CD4-positive, alpha-beta T cell (primary cell): ENCODE measurements at regions of chr20 and their contacts with region 1.

Region 1: DNA sequence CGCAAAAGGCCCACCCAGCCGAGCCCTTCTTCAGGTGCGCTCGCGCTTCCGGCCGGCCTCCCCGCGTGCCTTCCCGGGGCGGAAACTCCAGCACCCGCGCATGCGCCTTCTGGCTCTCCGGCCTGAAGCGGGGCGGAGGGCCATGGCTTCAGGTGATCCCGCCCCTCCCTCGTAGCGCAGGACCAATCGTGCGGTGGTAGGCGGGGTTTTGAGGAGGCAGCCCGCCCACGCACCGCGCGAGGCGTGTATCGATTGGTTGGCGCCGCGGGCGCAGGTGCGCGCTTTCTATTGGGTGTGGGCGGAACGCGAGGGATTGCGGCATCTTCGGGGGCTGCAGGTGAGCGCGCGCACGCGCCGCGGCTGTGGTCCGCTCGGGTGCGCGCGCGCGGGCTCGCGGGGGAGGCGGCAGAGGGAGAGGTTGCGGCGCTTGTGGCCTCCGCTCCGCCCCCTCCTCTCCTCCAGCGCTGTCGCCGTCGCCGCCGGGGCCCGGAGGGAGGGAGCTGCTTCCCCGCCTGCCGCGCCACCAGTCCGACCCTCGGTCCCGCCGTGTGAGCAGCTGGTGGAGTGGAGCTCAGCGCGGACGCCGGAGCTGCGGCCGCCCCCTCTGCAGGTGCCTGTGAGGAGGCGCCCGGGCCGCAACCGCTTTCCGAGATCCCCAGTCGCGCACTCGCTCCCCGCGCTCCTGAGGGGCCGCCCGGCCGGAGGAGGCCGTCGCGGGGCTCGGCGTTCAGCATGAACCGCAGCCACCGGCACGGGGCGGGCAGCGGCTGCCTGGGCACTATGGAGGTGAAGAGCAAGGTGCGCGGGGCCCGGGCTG is at the start of gene PARD6B:
- DNase-seq: peak; percentile 98 to 100 (median 99)
- ATAC-seq: peak; percentile 94
- H3K4me3 ChIP-seq: peak within 1 kb of the TSS; percentile 68
- H3K4me3 Mint-ChIP-seq: peak within 1 kb of the TSS; percentile 93
- H3K27ac ChIP-seq: peak within 1 kb of the TSS; percentile 44 to 52
- H3K27ac Mint-ChIP-seq: peak within 1 kb of the TSS; percentile 88
- H3K4me1 ChIP-seq: peaks cover 16% of the 10 kb centered on the region
- H3K4me1 Mint-ChIP-seq: peaks cover 41% of the 10 kb centered on the region
- H3K27me3 ChIP-seq: no peaks in the 10 kb centered on the region
- H3K27me3 Mint-ChIP-seq: no peaks in the 10 kb centered on the region
- CTCF ChIP-seq: no peak
- total RNA-seq, gene PARD6B: 5.6 to 8.2 TPM

Region 2: DNA sequence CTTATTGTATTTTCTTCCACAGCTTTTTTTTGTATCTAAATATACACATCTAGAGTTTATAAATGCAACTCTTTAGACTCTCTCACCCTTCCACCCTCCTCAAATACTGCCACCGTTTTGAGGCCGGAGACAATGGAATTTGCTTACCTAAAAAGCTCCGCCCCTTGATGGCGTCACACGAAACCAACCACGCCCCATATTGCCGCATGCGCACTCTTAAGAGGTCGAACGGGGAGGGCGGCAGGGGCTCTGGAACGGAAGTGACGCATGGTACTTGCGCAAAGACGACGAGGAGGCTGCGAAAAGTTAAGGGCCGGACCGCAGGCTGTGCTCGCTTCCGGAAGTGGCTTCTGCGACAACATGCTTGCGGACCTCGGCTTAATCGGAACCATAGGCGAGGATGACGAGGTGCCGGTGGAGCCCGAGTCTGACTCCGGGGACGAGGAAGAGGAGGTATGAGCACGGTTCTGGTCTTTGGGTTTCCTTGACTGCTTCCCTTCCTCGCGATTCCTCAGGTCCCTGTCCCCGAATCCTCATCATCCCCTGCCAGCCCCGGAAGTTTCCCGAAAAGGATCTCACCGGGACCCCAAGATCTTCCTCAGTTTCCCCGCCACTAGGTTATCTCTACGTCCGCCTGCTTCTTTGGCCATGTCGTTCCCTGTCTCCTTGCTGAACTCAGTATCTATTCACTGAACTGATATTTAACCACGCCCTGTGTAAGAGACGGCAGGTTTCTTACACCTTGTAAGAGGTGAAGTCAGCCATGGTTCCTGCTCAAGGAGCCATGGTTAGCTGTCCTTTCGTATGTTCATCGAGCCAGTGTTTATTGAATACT is 1512.0 kb before region 1 on chr20 and contains the start of gene DDX27:
- CTCF ChIA-PET with region 1: no interaction called
- POLR2A ChIA-PET with region 1: no interaction called
- intact Hi-C with region 1: loop called in 1 of 2 experiments (anchors 5 kb)
- DNase-seq: peak; percentile 90 to 99 (median 96)
- ATAC-seq: peak; percentile 84
- H3K4me3 ChIP-seq: peak within 1 kb of the TSS; percentile 79
- H3K4me3 Mint-ChIP-seq: peak within 1 kb of the TSS; percentile 86
- H3K27ac ChIP-seq: peak within 1 kb of the TSS; percentile 85 to 91
- H3K27ac Mint-ChIP-seq: peak within 1 kb of the TSS; percentile 87
- H3K4me1 ChIP-seq: peaks cover 33% of the 10 kb centered on the region
- H3K4me1 Mint-ChIP-seq: peaks cover 24% of the 10 kb centered on the region
- H3K27me3 ChIP-seq: no peaks in the 10 kb centered on the region
- H3K27me3 Mint-ChIP-seq: no peaks in the 10 kb centered on the region
- CTCF ChIP-seq: no peak
- total RNA-seq, gene DDX27: 116 to 126 TPM

Region 3: GRCh38 chr20:49812463-49813304 is 918.6 kb before region 1 on chr20 and contains the start of gene SLC9A8:
- CTCF ChIA-PET with region 1: no interaction called
- POLR2A ChIA-PET with region 1: no interaction called
- intact Hi-C with region 1: loop called in 1 of 2 experiments (anchors 10 kb)
- DNase-seq: peak; percentile 63 to 96 (median 76)
- ATAC-seq: peak; percentile 86
- H3K4me3 ChIP-seq: peak within 1 kb of the TSS; percentile 96
- H3K4me3 Mint-ChIP-seq: peak within 1 kb of the TSS; percentile 97
- H3K27ac ChIP-seq: peak within 1 kb of the TSS; percentile 89 to 92
- H3K27ac Mint-ChIP-seq: peak within 1 kb of the TSS; percentile 97
- H3K4me1 ChIP-seq: peaks cover 25% of the 10 kb centered on the region
- H3K4me1 Mint-ChIP-seq: peaks cover 38% of the 10 kb centered on the region
- H3K27me3 ChIP-seq: no peaks in the 10 kb centered on the region
- H3K27me3 Mint-ChIP-seq: no peaks in the 10 kb centered on the region
- CTCF ChIP-seq: peak; percentile 28
- total RNA-seq, gene SLC9A8: 29.5 to 30.2 TPM

Region 4: GRCh38 chr20:50115591-50116372 is 615.5 kb before region 1 on chr20:
- CTCF ChIA-PET with region 1: interaction called, 3 read pairs
- POLR2A ChIA-PET with region 1: no interaction called
- intact Hi-C with region 1: loop called (anchors 2 to 10 kb)
- DNase-seq: peak; percentile 82 to 97 (median 88)
- ATAC-seq: peak; percentile 83
- H3K4me3 ChIP-seq: peak overlapping the region; percentile 58
- H3K4me3 Mint-ChIP-seq: peak overlapping the region; percentile 92
- H3K27ac ChIP-seq: no peak overlapping the region
- H3K27ac Mint-ChIP-seq: peak overlapping the region; percentile 85
- H3K4me1 ChIP-seq: peaks cover 53% of the 10 kb centered on the region
- H3K4me1 Mint-ChIP-seq: peaks cover 53% of the 10 kb centered on the region
- H3K27me3 ChIP-seq: no peaks in the 10 kb centered on the region
- H3K27me3 Mint-ChIP-seq: no peaks in the 10 kb centered on the region
- CTCF ChIP-seq: no peak

Region 5: GRCh38 chr20:50575847-50576720 is 155.2 kb before region 1 on chr20:
- CTCF ChIA-PET with region 1: no interaction called
- POLR2A ChIA-PET with region 1: no interaction called
- intact Hi-C with region 1: no loop called
- DNase-seq: peak; percentile 46 to 79 (median 62)
- ATAC-seq: peak; percentile 86
- H3K4me3 ChIP-seq: no peak overlapping the region
- H3K4me3 Mint-ChIP-seq: no peak overlapping the region
- H3K27ac ChIP-seq: no peak overlapping the region
- H3K27ac Mint-ChIP-seq: peak overlapping the region; percentile 47
- H3K4me1 ChIP-seq: peaks cover 7% of the 10 kb centered on the region
- H3K4me1 Mint-ChIP-seq: peaks cover 42% of the 10 kb centered on the region
- H3K27me3 ChIP-seq: no peaks in the 10 kb centered on the region
- H3K27me3 Mint-ChIP-seq: no peaks in the 10 kb centered on the region
- CTCF ChIP-seq: peak; percentile 68

Region 6: DNA sequence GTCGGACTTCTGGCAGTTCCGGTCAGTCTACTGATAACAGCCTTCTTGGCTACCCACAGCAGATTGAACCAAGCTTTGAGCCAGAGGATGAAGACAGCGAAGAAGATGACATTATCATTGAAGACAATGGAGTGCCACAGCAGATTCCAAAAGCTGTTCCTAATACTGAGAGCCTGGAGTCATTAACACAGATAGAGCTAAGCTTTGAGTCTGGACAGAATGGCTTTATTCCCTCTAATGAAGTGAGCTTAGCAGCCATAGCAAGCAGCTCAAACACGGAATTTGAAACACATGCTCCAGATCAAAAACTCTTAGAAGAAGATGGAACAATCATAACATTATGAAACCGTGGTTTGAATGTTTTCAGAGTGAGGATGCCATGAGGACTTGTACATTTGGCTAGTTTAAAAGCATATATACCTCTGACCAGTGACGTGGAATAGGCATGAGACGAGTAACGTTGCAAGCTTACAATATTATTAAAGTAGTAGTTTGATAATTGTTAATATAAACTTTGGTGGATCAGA is 18.9 kb after region 1 on chr20:
- CTCF ChIA-PET with region 1: interaction called, 22 read pairs
- POLR2A ChIA-PET with region 1: interaction called, 7 read pairs
- intact Hi-C with region 1: no loop called
- DNase-seq: no peak
- ATAC-seq: no peak
- H3K4me3 ChIP-seq: no peak overlapping the region
- H3K4me3 Mint-ChIP-seq: no peak overlapping the region
- H3K27ac ChIP-seq: no peak overlapping the region
- H3K27ac Mint-ChIP-seq: no peak overlapping the region
- H3K4me1 ChIP-seq: no peaks in the 10 kb centered on the region
- H3K4me1 Mint-ChIP-seq: peaks cover 13% of the 10 kb centered on the region
- H3K27me3 ChIP-seq: no peaks in the 10 kb centered on the region
- H3K27me3 Mint-ChIP-seq: no peaks in the 10 kb centered on the region
- CTCF ChIP-seq: no peak

Region 7: GRCh38 chr20:50929299-50930138 is 198.3 kb after region 1 on chr20:
- CTCF ChIA-PET with region 1: interaction called, 10 read pairs
- POLR2A ChIA-PET with region 1: interaction called, 9 read pairs
- intact Hi-C with region 1: loop called in 1 of 2 experiments (anchors 2 kb)
- DNase-seq: peak; percentile 76 to 97 (median 90)
- ATAC-seq: peak; percentile 76
- H3K4me3 ChIP-seq: peak overlapping the region; percentile 66
- H3K4me3 Mint-ChIP-seq: peak overlapping the region; percentile 93
- H3K27ac ChIP-seq: peak overlapping the region; percentile 2 to 37
- H3K27ac Mint-ChIP-seq: peak overlapping the region; percentile 98
- H3K4me1 ChIP-seq: peaks cover 37% of the 10 kb centered on the region
- H3K4me1 Mint-ChIP-seq: peaks cover 69% of the 10 kb centered on the region
- H3K27me3 ChIP-seq: no peaks in the 10 kb centered on the region
- H3K27me3 Mint-ChIP-seq: no peaks in the 10 kb centered on the region
- CTCF ChIP-seq: peak; percentile 90